MCF 10A (cell line): ENCODE measurements at regions of chr10 and their contacts with region 1.

Region 1: GRCh38 chr10:110629680-110630191 is 14.4 kb upstream of the RBM20 start:
- DNase-seq: peak; percentile 86
- H3K4me3 Mint-ChIP-seq: no peak overlapping the region
- H3K27ac Mint-ChIP-seq: no peak overlapping the region
- H3K4me1 Mint-ChIP-seq: peaks cover 31% of the 10 kb centered on the region
- H3K27me3 Mint-ChIP-seq: no peaks in the 10 kb centered on the region
- CTCF ChIP-seq: no peak

Region 2: DNA sequence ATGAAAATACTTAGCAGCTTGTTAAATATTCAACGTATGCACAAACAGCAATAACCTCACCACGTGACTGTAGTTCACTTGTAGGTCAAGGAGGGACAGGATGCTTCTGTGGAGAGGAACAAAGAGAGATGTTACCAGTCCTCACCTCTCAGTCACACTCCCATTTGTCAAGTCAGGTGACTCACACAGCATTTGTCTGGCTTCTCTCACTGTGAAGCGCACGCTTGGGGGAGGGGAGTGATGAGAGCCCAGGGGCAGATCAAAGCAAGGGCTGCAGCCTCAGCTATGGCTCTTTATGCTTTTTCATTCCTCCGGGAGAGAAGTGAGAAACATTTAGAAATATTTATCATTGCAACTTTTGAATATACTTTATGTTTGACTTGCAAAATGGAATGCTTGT is 11.5 kb after region 1 on chr10:
- CTCF ChIA-PET with region 1: interaction called, 3 read pairs
- POLR2A ChIA-PET with region 1: interaction called, 10 read pairs
- intact Hi-C with region 1: no loop called
- DNase-seq: peak; percentile 61
- H3K4me3 Mint-ChIP-seq: no peak overlapping the region
- H3K27ac Mint-ChIP-seq: no peak overlapping the region
- H3K4me1 Mint-ChIP-seq: peaks cover 10% of the 10 kb centered on the region
- H3K27me3 Mint-ChIP-seq: peaks cover 29% of the 10 kb centered on the region
- CTCF ChIP-seq: no peak